GM10248 (cell line): ENCODE measurements at regions of chr17 and their contacts with region 1.

Region 1: DNA sequence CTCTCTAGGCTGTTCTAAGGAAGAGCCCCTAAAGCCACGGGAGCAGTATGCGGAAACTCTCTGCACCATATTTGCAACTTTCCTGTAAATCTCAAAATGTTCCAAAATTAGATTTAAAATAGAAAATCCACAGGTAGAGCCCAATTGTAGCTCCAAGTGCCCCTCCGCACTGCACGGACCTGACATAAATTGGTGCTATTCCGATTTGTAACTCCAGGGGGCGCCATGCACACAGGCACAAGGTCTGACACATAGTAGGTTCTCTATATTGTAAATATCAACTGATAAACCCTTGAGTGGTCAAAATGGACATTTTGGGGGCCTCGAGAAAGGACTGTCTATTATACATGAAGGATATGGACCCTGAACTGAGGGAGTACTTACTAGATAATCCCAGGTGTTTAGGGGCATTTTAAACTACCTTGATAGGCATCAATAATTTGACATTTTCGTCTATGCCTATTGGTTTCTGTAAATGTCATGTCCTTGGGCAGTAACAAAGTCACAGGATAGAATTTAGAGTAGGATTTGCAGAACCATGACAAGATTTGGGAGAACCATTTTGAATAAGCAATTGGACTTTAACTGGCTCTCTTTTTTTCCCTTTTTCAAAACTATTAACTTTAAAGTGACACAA is 36.6 kb upstream of the TMEM132E start:
- DNase-seq: peak; percentile 42
- CTCF ChIP-seq: peak; percentile 70

Region 2: DNA sequence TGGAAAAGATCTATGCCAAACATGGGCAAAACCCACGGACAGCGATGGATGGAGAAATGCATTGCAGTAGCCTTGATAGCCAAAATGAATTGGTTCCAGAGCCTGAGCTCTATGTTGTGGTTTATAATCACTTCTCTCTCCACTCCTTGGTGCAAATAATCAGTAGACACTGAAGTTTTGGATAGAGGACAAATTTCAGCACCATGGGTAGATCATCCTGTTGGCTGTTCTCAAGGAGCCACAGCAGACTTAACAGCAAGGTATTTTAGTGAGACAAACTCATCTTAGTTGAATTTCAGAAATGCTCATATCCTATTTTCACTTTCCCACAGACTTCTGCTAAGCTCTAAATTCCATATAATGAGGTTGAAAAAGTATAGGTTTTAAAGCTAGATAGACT is 91.5 kb before region 1 on chr17:
- CTCF ChIA-PET with region 1: no interaction called
- POLR2A ChIA-PET with region 1: no interaction called
- DNase-seq: no peak
- CTCF ChIP-seq: no peak

Region 3: GRCh38 chr17:34556384-34556783 is 13.6 kb after region 1 on chr17:
- CTCF ChIA-PET with region 1: interaction called, 14 read pairs
- POLR2A ChIA-PET with region 1: no interaction called
- DNase-seq: no peak
- CTCF ChIP-seq: no peak

Region 4: GRCh38 chr17:34562387-34562786 is 19.6 kb after region 1 on chr17:
- CTCF ChIA-PET with region 1: interaction called, 14 read pairs
- POLR2A ChIA-PET with region 1: no interaction called
- DNase-seq: no peak
- CTCF ChIP-seq: no peak